Activated B cell treated with CpG ODN at 0.5 μM for 24 hours (primary cell): ENCODE measurements at regions of chr7 and their contacts with region 1.

Region 1: GRCh38 chr7:105652359-105652993 is 71.2 kb upstream of the EFCAB10 start:
- DNase-seq: peak; percentile 45
- ATAC-seq: peak; percentile 94
- H3K4me3 Mint-ChIP-seq: no peak overlapping the region
- H3K27ac Mint-ChIP-seq: no peak overlapping the region
- H3K4me1 Mint-ChIP-seq: peaks cover 2% of the 10 kb centered on the region
- H3K27me3 Mint-ChIP-seq: no peaks in the 10 kb centered on the region
- CTCF ChIP-seq: no peak

Region 2: GRCh38 chr7:105678811-105679495 is 26.5 kb after region 1 on chr7:
- CTCF ChIA-PET with region 1: interaction called, 3 read pairs
- POLR2A ChIA-PET with region 1: no interaction called
- intact Hi-C with region 1: loop called (anchors 2 kb)
- DNase-seq: peak; percentile 42
- ATAC-seq: peak; percentile 62
- H3K4me3 Mint-ChIP-seq: peak overlapping the region; percentile 94
- H3K27ac Mint-ChIP-seq: peak overlapping the region; percentile 89
- H3K4me1 Mint-ChIP-seq: peaks cover 57% of the 10 kb centered on the region
- H3K27me3 Mint-ChIP-seq: no peaks in the 10 kb centered on the region
- CTCF ChIP-seq: no peak

Region 3: DNA sequence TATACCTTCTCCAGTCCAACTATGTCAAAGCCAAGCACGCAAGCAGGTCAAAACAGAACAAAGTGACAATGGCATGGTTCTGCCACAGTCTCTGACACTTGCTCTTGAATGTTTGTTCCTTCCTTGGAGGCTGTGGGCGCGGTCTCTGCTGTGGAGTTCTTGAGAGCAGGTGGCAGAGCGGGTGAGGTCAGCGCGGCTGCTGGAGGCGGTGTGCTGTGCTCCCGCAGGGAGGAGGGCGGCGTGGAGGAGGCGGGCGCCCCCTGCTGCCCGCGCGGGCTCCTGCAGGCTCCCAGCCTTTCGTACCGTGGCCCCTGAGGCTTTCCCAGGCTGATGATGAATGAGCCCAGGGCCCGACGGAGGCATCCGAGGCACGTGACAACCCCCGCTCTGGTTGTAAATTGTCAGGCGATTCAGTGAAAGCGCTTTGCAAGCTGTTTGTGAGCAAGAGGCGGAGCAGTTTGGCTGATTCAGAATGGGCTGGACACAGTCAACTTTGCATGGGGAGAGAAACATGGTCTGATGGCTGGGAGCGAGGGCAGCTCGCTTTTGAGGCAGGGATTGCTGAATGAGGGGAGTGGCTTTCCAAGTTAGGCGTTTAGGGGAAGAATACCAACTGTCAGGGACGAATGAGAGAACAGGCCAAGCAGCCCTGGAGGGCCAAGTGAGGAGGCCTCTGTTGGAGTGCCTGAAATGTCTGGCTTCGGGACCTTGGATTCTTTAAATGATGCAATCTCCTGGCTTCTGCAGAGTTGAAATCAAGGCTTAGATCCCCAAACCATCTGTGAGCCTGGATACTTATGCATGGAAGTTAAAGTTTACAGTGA is 357.1 kb after region 1 on chr7:
- CTCF ChIA-PET with region 1: interaction called, 7 read pairs
- POLR2A ChIA-PET with region 1: no interaction called
- intact Hi-C with region 1: loop called (anchors 1 kb)
- DNase-seq: peak; percentile 73
- ATAC-seq: peak; percentile 98
- H3K4me3 Mint-ChIP-seq: no peak overlapping the region
- H3K27ac Mint-ChIP-seq: no peak overlapping the region
- H3K4me1 Mint-ChIP-seq: peaks cover 22% of the 10 kb centered on the region
- H3K27me3 Mint-ChIP-seq: peaks cover 4% of the 10 kb centered on the region
- CTCF ChIP-seq: no peak

Region 4: GRCh38 chr7:106166655-106167342 is 514.3 kb after region 1 on chr7:
- CTCF ChIA-PET with region 1: interaction called, 7 read pairs
- POLR2A ChIA-PET with region 1: no interaction called
- intact Hi-C with region 1: loop called (anchors 1 kb)
- DNase-seq: no peak
- ATAC-seq: peak; percentile 54
- H3K4me3 Mint-ChIP-seq: no peak overlapping the region
- H3K27ac Mint-ChIP-seq: no peak overlapping the region
- H3K4me1 Mint-ChIP-seq: peaks cover 10% of the 10 kb centered on the region
- H3K27me3 Mint-ChIP-seq: peaks cover 2% of the 10 kb centered on the region
- CTCF ChIP-seq: peak; percentile 77